ENCODE measurements at regions of chr2 and their contacts with region 1.

Region 1: DNA sequence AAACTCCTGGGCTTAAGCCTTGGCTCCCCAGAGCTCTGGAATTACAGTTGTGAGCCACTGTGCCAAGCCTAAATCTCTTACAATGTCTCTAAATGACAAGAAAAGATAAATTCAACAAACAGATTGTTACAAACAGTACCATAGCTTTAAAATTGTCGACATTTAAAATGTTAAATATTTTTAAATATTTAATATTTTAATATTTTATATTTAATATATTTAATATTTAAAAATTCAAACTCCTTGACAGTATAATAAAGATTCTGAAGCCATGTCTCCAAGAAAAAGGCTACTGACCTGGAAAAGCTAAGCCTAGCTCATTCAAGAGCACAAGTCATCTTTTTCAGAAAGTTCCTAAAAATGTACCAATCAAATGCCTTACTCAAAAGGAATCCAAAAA is 75.3 kb downstream of the INPP5D start:
- DNase-seq: no peak
- H3K4me3 ChIP-seq: no peak overlapping the region
- H3K27ac ChIP-seq: no peak overlapping the region
- H3K4me1 ChIP-seq: no peaks in the 10 kb centered on the region
- H3K27me3 ChIP-seq: no peaks in the 10 kb centered on the region
- CTCF ChIP-seq: no peak
- POLR2A ChIP-seq: no peak

Region 2: DNA sequence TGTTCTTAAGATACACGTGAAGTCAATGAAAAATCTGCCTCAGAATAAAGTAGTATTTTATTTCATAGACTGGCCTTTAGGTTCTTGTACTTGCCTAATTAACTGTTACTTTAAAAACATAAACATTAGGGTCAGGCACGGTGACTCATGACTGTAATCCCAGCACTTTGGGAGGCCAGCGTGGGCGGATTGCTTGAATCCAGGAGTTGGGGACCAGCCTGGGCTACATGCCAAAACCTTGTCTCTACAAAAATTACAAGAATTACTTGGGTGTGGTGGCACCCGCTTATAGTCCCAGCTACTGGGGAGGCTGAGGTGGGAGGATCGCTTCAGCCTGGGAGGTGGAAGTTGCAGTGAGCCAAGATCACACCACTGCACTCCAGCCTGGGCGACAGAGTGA is 281.3 kb before region 1 on chr2:
- CTCF ChIA-PET with region 1: no interaction called
- POLR2A ChIA-PET with region 1: no interaction called
- dilution Hi-C with region 1: no loop called
- intact Hi-C with region 1: loop called (anchors 5 kb)
- DNase-seq: peak; percentile 68
- H3K4me3 ChIP-seq: no peak overlapping the region
- H3K27ac ChIP-seq: no peak overlapping the region
- H3K4me1 ChIP-seq: peaks cover 8% of the 10 kb centered on the region
- H3K27me3 ChIP-seq: no peaks in the 10 kb centered on the region
- CTCF ChIP-seq: no peak
- POLR2A ChIP-seq: no peak

Measured in endothelial cell of umbilical vein (primary cell).